Mammary epithelial cell (primary cell): ENCODE measurements at regions of chr13 and their contacts with region 1.

Region 1: GRCh38 chr13:26186118-26186870 is 35.8 kb downstream of the RNF6 start:
- DNase-seq: peak; percentile 92
- H3K4me3 ChIP-seq: peak overlapping the region; percentile 58 to 69 (median 63)
- H3K27ac ChIP-seq: no peak overlapping the region
- H3K4me1 ChIP-seq: peaks cover 10% of the 10 kb centered on the region
- H3K27me3 ChIP-seq: no peaks in the 10 kb centered on the region
- CTCF ChIP-seq: peak; percentile 34 to 76

Region 2: DNA sequence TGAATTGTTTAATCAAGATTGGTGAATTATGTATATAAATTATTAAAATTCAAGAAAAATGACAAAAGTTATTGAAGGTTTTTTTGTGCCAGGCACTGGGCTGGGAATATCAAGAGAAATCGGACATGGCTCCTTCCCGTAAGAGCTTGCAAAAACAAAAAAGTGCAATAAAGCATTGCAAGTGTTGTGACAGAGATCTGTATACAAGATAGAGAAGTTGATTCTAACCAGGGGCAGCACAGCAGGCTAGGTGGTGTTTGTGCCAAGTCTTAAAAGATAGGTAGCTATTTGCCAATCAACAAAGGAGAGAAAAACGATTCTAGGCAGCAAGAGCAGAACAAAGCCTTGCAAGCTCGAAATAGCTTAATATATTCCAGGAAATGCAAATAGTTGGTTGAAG is 247.5 kb after region 1 on chr13:
- CTCF ChIA-PET with region 1: interaction called, 10 read pairs
- dilution Hi-C with region 1: no loop called
- in situ Hi-C with region 1: no loop called
- intact Hi-C with region 1: no loop called
- DNase-seq: no peak
- H3K4me3 ChIP-seq: no peak overlapping the region
- H3K27ac ChIP-seq: no peak overlapping the region
- H3K4me1 ChIP-seq: no peaks in the 10 kb centered on the region
- H3K27me3 ChIP-seq: no peaks in the 10 kb centered on the region
- CTCF ChIP-seq: no peak

Region 3: GRCh38 chr13:26482451-26483197 is 296.3 kb after region 1 on chr13:
- CTCF ChIA-PET with region 1: interaction called, 10 read pairs
- dilution Hi-C with region 1: loop called (anchors 25 kb)
- in situ Hi-C with region 1: loop called in 1 of 2 experiments (anchors 10 kb)
- intact Hi-C with region 1: loop called (anchors 1 kb)
- DNase-seq: peak; percentile 57
- H3K4me3 ChIP-seq: no peak overlapping the region
- H3K27ac ChIP-seq: no peak overlapping the region
- H3K4me1 ChIP-seq: no peaks in the 10 kb centered on the region
- H3K27me3 ChIP-seq: no peaks in the 10 kb centered on the region
- CTCF ChIP-seq: peak; percentile 84 to 88

Region 4: GRCh38 chr13:26628706-26629105 is 442.4 kb after region 1 on chr13:
- CTCF ChIA-PET with region 1: no interaction called
- dilution Hi-C with region 1: no loop called
- in situ Hi-C with region 1: loop called in 1 of 2 experiments (anchors 10 kb)
- intact Hi-C with region 1: loop called (anchors 1 kb)
- DNase-seq: peak; percentile 27
- H3K4me3 ChIP-seq: no peak overlapping the region
- H3K27ac ChIP-seq: no peak overlapping the region
- H3K4me1 ChIP-seq: no peaks in the 10 kb centered on the region
- H3K27me3 ChIP-seq: no peaks in the 10 kb centered on the region
- CTCF ChIP-seq: peak; percentile 23 to 60

Region 5: DNA sequence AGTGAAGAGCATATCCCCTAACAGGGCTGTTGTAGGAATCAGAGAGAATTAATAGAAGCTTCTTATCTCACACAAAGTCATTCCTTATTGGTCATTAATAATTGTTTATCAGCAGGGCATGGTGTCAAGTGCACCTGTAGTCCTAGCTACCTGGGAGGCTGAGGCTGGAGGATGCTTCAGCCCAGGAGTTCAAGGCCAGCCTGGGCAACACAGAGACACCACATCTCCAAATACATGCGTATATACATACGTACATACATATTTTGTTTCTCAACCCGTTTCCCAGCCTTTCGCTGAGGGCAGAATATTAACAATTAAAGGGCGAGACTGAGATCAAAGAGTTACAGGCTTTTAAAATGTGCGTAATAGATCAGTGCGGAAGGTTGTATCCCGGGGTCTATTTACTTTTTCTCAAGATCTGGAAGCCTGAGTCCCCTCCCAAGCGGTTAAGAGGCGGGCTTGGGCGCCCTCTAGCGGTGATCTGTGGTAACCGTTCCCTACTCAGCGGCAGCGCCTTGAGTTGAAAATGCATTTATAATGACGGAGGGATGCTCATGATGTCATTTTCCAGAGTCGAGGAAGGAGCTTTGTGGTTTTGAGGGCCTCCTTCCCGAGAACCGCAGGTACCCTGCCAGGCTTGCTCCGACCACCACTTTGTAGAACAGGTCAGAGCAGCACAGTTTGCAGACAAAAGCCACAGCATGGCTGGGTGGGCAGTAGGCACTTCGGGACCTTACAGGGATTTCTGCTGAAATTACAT is 743.9 kb after region 1 on chr13:
- CTCF ChIA-PET with region 1: no interaction called
- dilution Hi-C with region 1: no loop called
- in situ Hi-C with region 1: no loop called
- intact Hi-C with region 1: loop called (anchors 2 kb)
- DNase-seq: peak; percentile 28
- H3K4me3 ChIP-seq: no peak overlapping the region
- H3K27ac ChIP-seq: no peak overlapping the region
- H3K4me1 ChIP-seq: no peaks in the 10 kb centered on the region
- H3K27me3 ChIP-seq: no peaks in the 10 kb centered on the region
- CTCF ChIP-seq: peak; percentile 86 to 89